ENCODE measurements at regions of chr15 and their contacts with region 1.

Region 1: GRCh38 chr15:90320061-90320884 is 31.8 kb upstream of the ZNF774 start:
- DNase-seq: peak; percentile 84 to 89
- ATAC-seq: peak; percentile 91
- H3K4me3 ChIP-seq: no peak overlapping the region
- H3K27ac ChIP-seq: peak overlapping the region in 1 of 2 donors; percentile 16
- H3K4me1 ChIP-seq: peaks cover 0 to 2% of the 10 kb centered on the region in 2 donors
- H3K27me3 ChIP-seq: no peaks in the 10 kb centered on the region

Region 2: DNA sequence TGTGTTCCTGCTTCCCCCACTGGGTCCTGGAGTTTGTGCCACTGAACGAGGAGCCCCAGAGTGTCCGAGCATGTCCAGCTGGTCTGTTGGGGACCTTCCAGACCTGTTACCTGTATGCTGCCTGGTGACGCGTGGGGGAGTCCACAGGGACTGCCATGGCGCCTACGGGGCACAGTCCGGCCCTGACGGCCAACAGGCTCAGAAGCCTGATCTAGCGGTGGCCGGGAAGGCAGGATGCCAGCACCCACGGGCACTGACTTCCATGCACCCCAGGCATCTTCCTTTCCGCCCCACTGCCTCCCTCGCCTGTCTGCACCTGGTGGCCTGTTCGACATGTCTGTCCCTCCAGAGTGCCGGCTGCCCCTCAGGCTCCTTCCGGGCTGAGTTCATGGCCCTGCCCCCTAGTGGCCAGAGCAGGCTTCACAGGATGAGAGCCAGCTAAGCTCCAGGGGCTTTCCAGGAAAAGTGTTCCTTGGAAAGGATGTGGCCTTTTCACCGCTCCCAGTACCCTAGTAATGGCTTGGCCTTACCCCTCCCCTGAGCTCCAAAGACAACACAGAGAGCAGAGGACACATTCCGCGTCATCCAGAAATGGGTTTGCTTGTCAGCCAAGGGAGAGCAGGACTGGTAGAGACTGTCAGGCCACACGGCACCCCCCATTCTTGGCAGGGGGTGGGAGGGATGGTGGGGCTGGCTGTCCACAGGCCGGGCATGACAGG is 19.1 kb before region 1 on chr15:
- intact Hi-C with region 1: loop called in 1 of 2 experiments (anchors 2 kb)
- DNase-seq: peak; percentile 80 to 91
- ATAC-seq: peak; percentile 80
- H3K4me3 ChIP-seq: no peak overlapping the region
- H3K27ac ChIP-seq: no peak overlapping the region
- H3K4me1 ChIP-seq: no peaks in the 10 kb centered on the region
- H3K27me3 ChIP-seq: no peaks in the 10 kb centered on the region

Region 3: DNA sequence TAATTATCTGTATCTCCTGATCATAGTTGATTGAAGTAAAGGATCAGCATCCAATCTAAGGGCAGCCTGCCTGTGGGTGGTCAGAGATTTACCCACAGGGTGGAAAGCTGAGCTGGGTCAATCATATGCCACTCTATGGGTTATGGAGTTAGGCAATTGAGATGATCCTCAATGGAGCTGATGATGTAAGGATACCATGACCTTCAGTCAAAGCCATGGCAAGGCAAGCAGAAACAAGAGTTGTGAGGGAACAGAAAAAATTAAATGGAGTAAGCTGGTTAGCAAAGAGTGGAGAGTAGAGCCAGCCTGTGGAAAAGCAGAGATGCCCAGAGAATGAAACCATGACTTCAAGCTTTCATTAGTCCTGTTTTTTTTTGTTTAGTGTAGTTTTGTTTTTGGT is 62.0 kb after region 1 on chr15:
- intact Hi-C with region 1: loop called in 1 of 2 experiments (anchors 5 kb)
- DNase-seq: no peak
- ATAC-seq: no peak
- H3K4me3 ChIP-seq: no peak overlapping the region
- H3K27ac ChIP-seq: no peak overlapping the region
- H3K4me1 ChIP-seq: no peaks in the 10 kb centered on the region
- H3K27me3 ChIP-seq: no peaks in the 10 kb centered on the region

Region 4: DNA sequence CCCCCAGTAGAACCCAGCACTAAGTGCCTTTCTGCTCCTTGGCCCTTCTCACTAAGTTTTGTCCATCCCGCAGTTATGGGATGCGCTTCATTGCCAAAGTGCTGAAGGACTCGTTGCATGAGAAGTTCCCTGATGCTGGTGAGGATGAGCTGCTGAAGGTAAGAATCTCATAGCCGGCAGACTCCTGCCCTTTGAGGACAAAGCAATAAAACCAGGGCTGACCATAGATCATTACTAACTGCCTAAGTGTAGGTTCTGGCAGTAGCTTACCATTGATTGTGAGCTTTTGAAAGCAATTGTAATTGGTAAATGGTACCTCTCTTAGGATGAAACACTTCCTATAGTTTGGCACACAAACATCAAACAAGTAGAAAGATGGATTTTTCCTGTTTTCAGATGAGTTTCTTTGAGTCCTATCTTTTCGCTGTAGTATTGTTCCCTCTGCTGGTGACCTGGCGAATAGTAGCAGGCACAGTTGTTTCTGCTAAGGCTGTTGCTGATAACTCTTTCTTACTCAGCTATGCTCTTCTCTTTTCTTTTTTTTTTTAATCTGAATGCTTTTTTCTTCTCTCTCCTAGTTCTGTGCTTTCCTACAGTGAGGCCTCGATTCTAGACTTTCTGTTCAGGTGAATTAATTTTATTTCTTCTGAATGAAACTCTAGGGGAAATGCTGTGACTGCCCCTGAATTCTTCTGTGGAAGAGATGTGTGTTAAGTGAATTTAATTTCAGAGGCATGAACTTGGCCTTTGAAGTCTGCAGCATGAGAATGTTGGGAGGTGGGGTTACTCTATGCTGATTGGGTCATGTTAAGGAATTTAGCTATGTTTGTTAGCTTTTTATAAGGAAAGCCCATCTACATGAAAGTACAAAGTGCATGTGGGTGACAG is 162.1 kb after region 1 on chr15:
- intact Hi-C with region 1: loop called (anchors 5 kb)
- DNase-seq: no peak
- ATAC-seq: peak; percentile 76
- H3K4me3 ChIP-seq: no peak overlapping the region
- H3K27ac ChIP-seq: no peak overlapping the region
- H3K4me1 ChIP-seq: peaks cover 0 to 2% of the 10 kb centered on the region in 2 donors
- H3K27me3 ChIP-seq: no peaks in the 10 kb centered on the region

Region 5: DNA sequence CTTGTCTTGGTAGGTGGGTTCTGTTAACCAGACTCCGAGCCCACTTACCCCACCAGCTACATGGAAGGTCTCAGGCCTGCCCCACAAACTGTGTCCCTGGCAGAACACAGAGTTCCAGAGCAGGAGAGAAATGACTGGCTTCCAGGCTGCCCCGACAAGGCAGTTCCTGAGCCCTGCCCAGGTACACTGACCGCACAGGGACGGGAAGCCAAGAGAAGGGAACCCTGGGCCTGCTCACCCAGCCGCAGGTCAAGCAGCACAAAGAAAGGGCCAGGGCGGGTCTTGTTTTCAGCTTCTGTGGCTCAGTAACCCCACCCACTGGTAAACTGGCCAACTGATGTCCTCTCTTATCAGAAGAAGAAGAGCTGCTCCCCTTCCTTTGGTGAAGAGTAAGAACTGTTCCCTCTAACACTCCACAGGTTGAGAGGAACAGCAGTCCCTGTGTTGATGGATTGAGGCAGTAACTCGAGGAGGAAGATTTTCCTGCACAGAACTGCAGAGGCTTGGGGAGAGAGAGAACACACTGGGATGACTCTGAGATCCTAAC is 277.8 kb after region 1 on chr15:
- intact Hi-C with region 1: no loop called
- DNase-seq: no peak
- ATAC-seq: no peak
- H3K4me3 ChIP-seq: no peak overlapping the region
- H3K27ac ChIP-seq: peak overlapping the region; percentile 8 to 87
- H3K4me1 ChIP-seq: peaks cover 0 to 8% of the 10 kb centered on the region in 2 donors
- H3K27me3 ChIP-seq: no peaks in the 10 kb centered on the region